Naive thymus-derived CD4-positive, alpha-beta T cell (primary cell): ENCODE measurements at regions of chr1 and their contacts with region 1.

Region 1: DNA sequence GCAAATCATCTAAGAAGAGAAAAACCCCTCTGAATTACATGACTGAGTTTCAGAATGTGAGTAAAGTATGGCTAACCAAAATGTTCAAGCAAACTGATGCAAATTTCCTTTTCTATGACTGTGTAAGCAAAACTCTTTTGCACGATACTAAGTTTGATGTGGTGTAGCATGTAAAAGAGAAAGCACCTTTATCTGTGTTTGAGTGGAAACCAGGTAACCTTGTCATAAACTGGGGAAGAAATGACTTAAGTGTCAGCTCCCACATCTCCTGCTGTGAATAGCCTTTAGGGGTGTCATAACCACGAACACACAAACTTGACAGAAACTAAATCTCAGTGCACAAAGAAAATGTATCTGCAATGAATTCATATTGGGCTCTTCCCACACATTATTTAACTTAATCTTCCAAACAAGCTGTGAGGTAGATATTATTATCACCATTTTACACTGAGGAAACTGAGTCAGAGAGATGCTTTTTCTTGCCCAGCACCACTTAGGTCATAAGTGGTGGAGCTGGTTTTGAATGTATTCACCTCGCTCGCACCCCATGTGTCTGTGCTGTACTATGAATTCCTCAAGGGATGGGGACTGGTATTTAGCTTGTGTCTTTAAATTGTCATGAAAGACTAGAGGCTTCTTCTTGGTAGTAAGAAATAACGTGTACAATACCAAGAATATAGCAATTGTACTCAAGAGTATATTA is 32.9 kb upstream of the IL12RB2 start:
- DNase-seq: peak in 3 of 9 donors; percentile 1 to 25 (median 24)
- ATAC-seq: peak; percentile 66
- H3K4me3 ChIP-seq: no peak overlapping the region
- H3K4me3 Mint-ChIP-seq: peak overlapping the region in 1 of 10 donors; percentile 58
- H3K27ac ChIP-seq: no peak overlapping the region
- H3K27ac Mint-ChIP-seq: peak overlapping the region in 2 of 9 donors; percentile 5 to 82
- H3K4me1 ChIP-seq: no peaks in the 10 kb centered on the region
- H3K4me1 Mint-ChIP-seq: peaks cover 0 to 30% (median 10%) of the 10 kb centered on the region in 7 donors
- H3K27me3 ChIP-seq: no peaks in the 10 kb centered on the region
- H3K27me3 Mint-ChIP-seq: no peaks in the 10 kb centered on the region

Region 2: GRCh38 chr1:67085326-67085725 is 189.4 kb before region 1 on chr1:
- CTCF ChIA-PET with region 1: no interaction called
- POLR2A ChIA-PET with region 1: no interaction called
- intact Hi-C with region 1: no loop called
- DNase-seq: no peak
- ATAC-seq: no peak
- H3K4me3 ChIP-seq: no peak overlapping the region
- H3K4me3 Mint-ChIP-seq: no peak overlapping the region
- H3K27ac ChIP-seq: no peak overlapping the region
- H3K27ac Mint-ChIP-seq: no peak overlapping the region
- H3K4me1 ChIP-seq: no peaks in the 10 kb centered on the region
- H3K4me1 Mint-ChIP-seq: peaks cover 0 to 2% (median 0%) of the 10 kb centered on the region in 7 donors
- H3K27me3 ChIP-seq: no peaks in the 10 kb centered on the region
- H3K27me3 Mint-ChIP-seq: no peaks in the 10 kb centered on the region

Region 3: DNA sequence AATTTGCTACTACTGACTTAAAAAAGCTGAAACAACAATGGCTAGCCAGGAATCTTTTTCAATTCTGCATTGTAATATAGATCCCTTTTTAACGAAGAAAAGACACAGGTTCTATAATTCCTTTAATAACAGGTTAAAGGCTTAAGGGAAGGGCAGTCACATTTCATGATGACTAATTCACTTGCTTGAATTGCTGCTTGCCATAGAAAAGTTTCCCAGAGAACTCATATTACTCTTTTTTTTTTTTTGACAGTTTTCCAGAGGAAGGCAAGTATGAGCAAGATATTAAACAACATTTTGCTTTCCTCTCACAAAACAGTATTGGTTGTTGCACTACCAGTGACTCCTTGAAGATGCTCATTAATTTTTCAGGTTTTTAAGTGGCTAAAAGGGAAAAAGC is 47.6 kb before region 1 on chr1:
- CTCF ChIA-PET with region 1: no interaction called
- POLR2A ChIA-PET with region 1: no interaction called
- intact Hi-C with region 1: no loop called
- DNase-seq: no peak
- ATAC-seq: no peak
- H3K4me3 ChIP-seq: no peak overlapping the region
- H3K4me3 Mint-ChIP-seq: no peak overlapping the region
- H3K27ac ChIP-seq: no peak overlapping the region
- H3K27ac Mint-ChIP-seq: no peak overlapping the region
- H3K4me1 ChIP-seq: no peaks in the 10 kb centered on the region
- H3K4me1 Mint-ChIP-seq: peaks cover 0 to 8% (median 2%) of the 10 kb centered on the region in 7 donors
- H3K27me3 ChIP-seq: no peaks in the 10 kb centered on the region
- H3K27me3 Mint-ChIP-seq: peaks cover 0 to 7% (median 0%) of the 10 kb centered on the region in 5 donors

Region 4: GRCh38 chr1:67261680-67262079 is 13.1 kb before region 1 on chr1:
- CTCF ChIA-PET with region 1: no interaction called
- POLR2A ChIA-PET with region 1: interaction called, 4 read pairs
- intact Hi-C with region 1: loop called in 1 of 2 experiments (anchors 1 kb)
- DNase-seq: peak in 8 of 9 donors; percentile 24 to 67 (median 57)
- ATAC-seq: peak; percentile 52
- H3K4me3 ChIP-seq: no peak overlapping the region
- H3K4me3 Mint-ChIP-seq: peak overlapping the region in 7 of 10 donors; percentile 17 to 73 (median 34)
- H3K27ac ChIP-seq: no peak overlapping the region
- H3K27ac Mint-ChIP-seq: peak overlapping the region in 1 of 9 donors; percentile 8
- H3K4me1 ChIP-seq: peaks cover 17 to 22% of the 10 kb centered on the region in 2 donors
- H3K4me1 Mint-ChIP-seq: peaks cover 12 to 44% (median 31%) of the 10 kb centered on the region in 7 donors
- H3K27me3 ChIP-seq: no peaks in the 10 kb centered on the region
- H3K27me3 Mint-ChIP-seq: no peaks in the 10 kb centered on the region

Region 5: GRCh38 chr1:67285780-67286488 is 11.2 kb after region 1 on chr1:
- CTCF ChIA-PET with region 1: no interaction called
- POLR2A ChIA-PET with region 1: no interaction called
- intact Hi-C with region 1: loop called in 1 of 2 experiments (anchors 1 kb)
- DNase-seq: no peak
- ATAC-seq: no peak
- H3K4me3 ChIP-seq: no peak overlapping the region
- H3K4me3 Mint-ChIP-seq: no peak overlapping the region
- H3K27ac ChIP-seq: no peak overlapping the region
- H3K27ac Mint-ChIP-seq: peak overlapping the region in 1 of 9 donors; percentile 24
- H3K4me1 ChIP-seq: no peaks in the 10 kb centered on the region
- H3K4me1 Mint-ChIP-seq: peaks cover 0 to 38% (median 0%) of the 10 kb centered on the region in 7 donors
- H3K27me3 ChIP-seq: no peaks in the 10 kb centered on the region
- H3K27me3 Mint-ChIP-seq: peaks cover 0 to 3% (median 0%) of the 10 kb centered on the region in 5 donors

Region 6: DNA sequence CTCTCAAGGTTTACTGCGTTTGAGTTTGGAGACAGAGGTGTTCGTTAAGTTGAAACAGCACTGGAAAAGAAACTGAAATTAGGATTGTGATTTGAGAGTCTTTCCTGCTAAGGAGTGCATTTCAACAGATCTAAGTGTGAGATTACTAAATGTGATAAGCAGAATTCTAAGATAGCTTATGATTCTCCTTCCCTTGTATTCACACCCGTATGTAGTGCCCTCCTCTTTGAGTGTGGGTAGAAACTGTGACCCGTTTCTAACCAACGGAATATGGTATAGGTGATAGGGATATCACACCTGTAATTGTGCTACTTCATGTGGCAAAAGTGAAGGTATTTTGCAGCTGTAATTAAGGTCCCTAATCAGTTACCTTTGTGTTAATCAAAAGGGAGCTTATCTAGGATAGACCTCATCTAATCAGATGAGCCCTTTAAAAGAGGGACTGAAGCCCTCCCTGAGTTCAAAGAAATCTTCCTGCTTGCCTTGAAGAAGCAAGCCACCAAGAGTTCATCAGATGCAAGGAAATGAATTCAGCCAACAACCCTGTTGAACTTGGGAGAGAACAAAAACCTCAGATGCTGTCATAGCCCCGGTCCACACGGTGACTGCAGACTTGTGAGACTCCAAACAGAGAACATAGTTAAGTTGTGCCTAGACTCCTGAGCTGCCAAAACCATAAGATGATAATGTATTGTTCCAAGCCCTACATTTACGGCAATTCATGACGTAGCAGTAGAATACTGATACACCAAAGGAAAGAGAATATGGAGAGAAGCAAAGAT is 20.3 kb after region 1 on chr1:
- CTCF ChIA-PET with region 1: no interaction called
- POLR2A ChIA-PET with region 1: no interaction called
- intact Hi-C with region 1: loop called in 1 of 2 experiments (anchors 1 kb)
- DNase-seq: no peak
- ATAC-seq: peak; percentile 49
- H3K4me3 ChIP-seq: no peak overlapping the region
- H3K4me3 Mint-ChIP-seq: peak overlapping the region in 1 of 10 donors; percentile 79
- H3K27ac ChIP-seq: no peak overlapping the region
- H3K27ac Mint-ChIP-seq: peak overlapping the region in 1 of 9 donors; percentile 91
- H3K4me1 ChIP-seq: no peaks in the 10 kb centered on the region
- H3K4me1 Mint-ChIP-seq: peaks cover 0 to 59% (median 0%) of the 10 kb centered on the region in 7 donors
- H3K27me3 ChIP-seq: no peaks in the 10 kb centered on the region
- H3K27me3 Mint-ChIP-seq: peaks cover 0 to 28% (median 4%) of the 10 kb centered on the region in 5 donors

Region 7: GRCh38 chr1:67307251-67308060 is 32.7 kb after region 1 on chr1 and contains the start of gene IL12RB2:
- CTCF ChIA-PET with region 1: no interaction called
- POLR2A ChIA-PET with region 1: no interaction called
- intact Hi-C with region 1: loop called in 1 of 2 experiments (anchors 1 kb)
- DNase-seq: peak in 7 of 9 donors; percentile 11 to 68 (median 18)
- ATAC-seq: peak; percentile 78
- H3K4me3 ChIP-seq: peak within 1 kb of the TSS; percentile 19
- H3K4me3 Mint-ChIP-seq: peak within 1 kb of the TSS; percentile 76 to 99 (median 84)
- H3K27ac ChIP-seq: no peak within 1 kb of the TSS
- H3K27ac Mint-ChIP-seq: peak within 1 kb of the TSS in 2 of 9 donors; percentile 56 to 99
- H3K4me1 ChIP-seq: peaks cover 0 to 5% of the 10 kb centered on the region in 2 donors
- H3K4me1 Mint-ChIP-seq: peaks cover 0 to 78% (median 9%) of the 10 kb centered on the region in 7 donors
- H3K27me3 ChIP-seq: no peaks in the 10 kb centered on the region
- H3K27me3 Mint-ChIP-seq: peaks cover 0 to 22% (median 10%) of the 10 kb centered on the region in 5 donors
- total RNA-seq, gene IL12RB2: 0.38 to 78.1 (median 1.1) TPM

Region 8: DNA sequence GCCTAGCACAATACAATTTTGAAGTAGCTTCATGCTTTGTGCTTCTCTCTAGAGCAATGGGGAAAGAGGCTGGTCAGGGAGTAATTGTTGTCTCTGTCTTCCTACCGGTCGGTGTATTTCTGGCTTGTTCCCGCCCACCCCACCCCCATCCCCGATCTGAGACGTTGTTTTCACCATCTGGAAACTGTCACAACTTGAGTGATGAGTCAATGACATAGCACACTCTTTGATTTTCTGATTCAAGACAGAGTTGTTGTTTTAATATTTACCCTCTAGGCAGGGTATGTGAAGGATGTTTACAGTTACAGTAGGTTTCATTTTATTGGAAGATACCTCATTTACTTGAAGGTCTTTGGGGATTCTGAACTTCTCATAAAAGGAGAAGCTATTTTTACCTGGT is 39.9 kb after region 1 on chr1:
- CTCF ChIA-PET with region 1: no interaction called
- POLR2A ChIA-PET with region 1: no interaction called
- intact Hi-C with region 1: loop called in 1 of 2 experiments (anchors 1 kb)
- DNase-seq: no peak
- ATAC-seq: peak; percentile 41
- H3K4me3 ChIP-seq: no peak overlapping the region
- H3K4me3 Mint-ChIP-seq: peak overlapping the region in 4 of 10 donors; percentile 9 to 84 (median 34)
- H3K27ac ChIP-seq: no peak overlapping the region
- H3K27ac Mint-ChIP-seq: peak overlapping the region in 1 of 9 donors; percentile 92
- H3K4me1 ChIP-seq: no peaks in the 10 kb centered on the region
- H3K4me1 Mint-ChIP-seq: peaks cover 0 to 51% (median 0%) of the 10 kb centered on the region in 7 donors
- H3K27me3 ChIP-seq: no peaks in the 10 kb centered on the region
- H3K27me3 Mint-ChIP-seq: peaks cover 0 to 2% (median 0%) of the 10 kb centered on the region in 5 donors

Region 9: DNA sequence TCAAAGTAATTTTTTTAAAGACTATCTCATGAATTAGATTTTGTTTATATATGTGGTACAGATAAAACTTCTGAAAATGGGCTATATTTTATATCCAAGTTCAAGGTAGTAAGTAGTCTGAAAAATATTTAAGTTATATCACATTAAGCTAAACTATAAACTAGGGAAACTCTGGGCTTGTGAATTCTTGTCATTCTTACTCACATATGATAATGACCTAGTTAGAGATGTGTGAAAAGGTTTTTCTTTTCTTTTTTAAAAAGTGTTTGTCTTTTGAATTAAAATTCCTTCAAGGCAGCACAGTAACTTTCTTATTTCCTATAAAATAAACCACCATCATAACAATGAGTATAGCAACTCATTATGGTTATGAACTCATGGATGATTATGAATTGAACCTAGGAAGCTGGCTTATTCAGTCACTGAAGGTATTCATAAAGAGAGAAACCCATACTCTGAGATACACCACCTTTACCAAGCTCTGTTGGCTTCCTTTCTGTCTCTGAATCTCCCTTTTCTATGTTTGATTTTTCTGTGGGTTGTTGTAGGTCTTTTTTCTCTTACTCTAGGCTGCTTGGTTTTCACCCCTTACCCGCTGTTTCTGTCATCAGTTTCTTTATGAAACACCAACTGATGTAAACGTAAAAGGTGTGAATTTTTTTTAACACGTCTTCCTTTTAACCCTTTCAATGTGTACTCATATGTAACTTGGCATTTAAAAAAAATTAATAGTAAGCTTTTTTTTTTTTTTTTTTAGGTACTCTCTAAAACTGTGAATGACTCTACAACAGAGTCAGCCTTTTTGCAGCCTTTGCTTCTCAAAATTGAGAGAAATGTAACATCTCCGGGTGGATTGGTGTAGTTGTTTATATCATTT is 58.1 kb after region 1 on chr1:
- CTCF ChIA-PET with region 1: interaction called, 3 read pairs
- POLR2A ChIA-PET with region 1: no interaction called
- intact Hi-C with region 1: loop called in 1 of 2 experiments (anchors 1 kb)
- DNase-seq: peak in 5 of 9 donors; percentile 16 to 41 (median 33)
- ATAC-seq: peak; percentile 84
- H3K4me3 ChIP-seq: no peak overlapping the region
- H3K4me3 Mint-ChIP-seq: peak overlapping the region in 6 of 10 donors; percentile 0 to 51 (median 24)
- H3K27ac ChIP-seq: no peak overlapping the region
- H3K27ac Mint-ChIP-seq: peak overlapping the region; percentile 3 to 87 (median 23)
- H3K4me1 ChIP-seq: peaks cover 17 to 34% of the 10 kb centered on the region in 2 donors
- H3K4me1 Mint-ChIP-seq: peaks cover 19 to 73% (median 39%) of the 10 kb centered on the region in 7 donors
- H3K27me3 ChIP-seq: no peaks in the 10 kb centered on the region
- H3K27me3 Mint-ChIP-seq: no peaks in the 10 kb centered on the region